ENCODE measurements at regions of chr9 and their contacts with region 1.

Region 1: DNA sequence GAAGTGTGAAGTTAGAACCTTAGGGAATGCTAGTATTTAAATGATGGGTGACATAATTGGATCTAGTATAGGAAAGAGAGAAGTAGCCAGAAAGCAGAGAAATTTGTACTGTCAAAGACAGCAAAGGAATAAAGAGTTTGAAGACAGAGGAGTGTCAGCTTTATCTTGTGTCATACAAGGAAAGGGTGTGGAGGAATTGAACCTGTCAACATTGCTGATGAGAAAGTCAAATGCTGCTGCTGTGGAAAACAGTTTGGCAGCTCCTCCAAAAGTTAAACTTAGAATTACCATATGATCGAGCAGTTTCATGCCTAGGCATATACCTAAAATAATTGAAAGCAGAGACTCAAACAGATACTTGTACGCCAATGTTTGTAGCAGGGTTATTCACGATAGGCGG is 63.7 kb downstream of the DENND4C start:
- DNase-seq: no peak
- ATAC-seq: no peak
- H3K4me3 ChIP-seq: no peak overlapping the region
- H3K27ac ChIP-seq: no peak overlapping the region
- H3K4me1 ChIP-seq: no peaks in the 10 kb centered on the region
- H3K27me3 ChIP-seq: no peaks in the 10 kb centered on the region
- CTCF ChIP-seq: no peak
- POLR2A ChIP-seq: no peak
- RAD21 ChIP-seq: no peak

Region 2: GRCh38 chr9:19252174-19252884 is 41.9 kb before region 1 on chr9:
- CTCF ChIA-PET with region 1: no interaction called
- POLR2A ChIA-PET with region 1: no interaction called
- dilution Hi-C with region 1: no loop called
- in situ Hi-C with region 1: no loop called
- intact Hi-C with region 1: loop called (anchors 1 kb)
- DNase-seq: no peak
- ATAC-seq: no peak
- H3K4me3 ChIP-seq: no peak overlapping the region
- H3K27ac ChIP-seq: no peak overlapping the region
- H3K4me1 ChIP-seq: no peaks in the 10 kb centered on the region
- H3K27me3 ChIP-seq: no peaks in the 10 kb centered on the region
- CTCF ChIP-seq: no peak
- POLR2A ChIP-seq: no peak
- RAD21 ChIP-seq: no peak

Measured in IMR-90 (cell line).